Uterus (tissue), 4 donors: ENCODE measurements at regions of chr17 and their contacts with region 1.

Region 1: DNA sequence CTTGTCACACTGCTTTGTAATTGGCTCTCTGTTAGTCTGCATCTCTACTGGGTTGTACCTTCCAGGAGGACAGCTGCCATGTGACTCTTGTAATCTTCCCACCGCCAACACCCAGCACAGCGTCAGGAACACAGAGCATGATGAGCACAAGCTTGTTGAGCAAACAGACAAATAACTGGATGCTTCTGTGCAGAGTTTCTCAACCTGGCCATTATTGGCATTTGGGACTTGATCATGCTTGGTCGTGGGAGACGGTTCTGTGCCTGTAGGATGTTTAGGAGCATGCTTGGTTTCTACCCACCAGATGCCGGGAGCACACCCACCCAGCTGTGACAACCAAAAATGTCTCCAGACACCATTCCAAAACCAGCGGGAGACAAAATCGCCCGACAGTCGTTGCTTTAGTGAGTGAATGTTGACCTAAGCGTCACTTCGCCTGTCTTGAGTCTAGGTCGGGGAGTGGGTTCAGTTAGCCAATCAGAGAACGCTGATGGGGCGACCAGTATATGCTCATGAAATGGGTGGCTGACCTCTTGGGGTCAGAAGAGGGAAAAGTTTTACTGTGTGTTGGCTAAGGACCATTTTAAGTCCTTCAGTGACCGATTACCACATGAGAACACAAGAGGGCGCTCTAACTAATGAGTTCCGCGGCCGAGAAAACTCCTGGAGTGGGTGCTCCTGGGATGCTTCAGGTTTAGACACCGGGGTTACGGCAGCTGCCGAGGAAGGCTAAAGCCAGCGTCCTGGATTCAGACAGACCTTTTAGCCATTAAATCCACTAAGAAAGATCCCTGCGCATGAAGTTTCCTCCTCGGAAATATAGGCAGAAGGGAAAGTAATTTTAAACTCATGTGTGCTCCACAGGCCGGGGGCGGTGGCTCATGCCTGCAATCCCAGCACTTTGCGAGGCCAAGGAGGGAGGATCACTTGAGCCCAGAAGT is 57.8 kb upstream of the TEX2 start:
- DNase-seq: peak; percentile 53 to 75
- H3K4me3 ChIP-seq: no peak overlapping the region
- H3K27ac ChIP-seq: peak overlapping the region in 1 of 2 donors; percentile 25
- H3K4me1 ChIP-seq: no peaks in the 10 kb centered on the region
- H3K27me3 ChIP-seq: no peaks in the 10 kb centered on the region
- CTCF ChIP-seq: peak; percentile 74 to 80 (median 78)
- POLR2A ChIP-seq: no peak

Region 2: DNA sequence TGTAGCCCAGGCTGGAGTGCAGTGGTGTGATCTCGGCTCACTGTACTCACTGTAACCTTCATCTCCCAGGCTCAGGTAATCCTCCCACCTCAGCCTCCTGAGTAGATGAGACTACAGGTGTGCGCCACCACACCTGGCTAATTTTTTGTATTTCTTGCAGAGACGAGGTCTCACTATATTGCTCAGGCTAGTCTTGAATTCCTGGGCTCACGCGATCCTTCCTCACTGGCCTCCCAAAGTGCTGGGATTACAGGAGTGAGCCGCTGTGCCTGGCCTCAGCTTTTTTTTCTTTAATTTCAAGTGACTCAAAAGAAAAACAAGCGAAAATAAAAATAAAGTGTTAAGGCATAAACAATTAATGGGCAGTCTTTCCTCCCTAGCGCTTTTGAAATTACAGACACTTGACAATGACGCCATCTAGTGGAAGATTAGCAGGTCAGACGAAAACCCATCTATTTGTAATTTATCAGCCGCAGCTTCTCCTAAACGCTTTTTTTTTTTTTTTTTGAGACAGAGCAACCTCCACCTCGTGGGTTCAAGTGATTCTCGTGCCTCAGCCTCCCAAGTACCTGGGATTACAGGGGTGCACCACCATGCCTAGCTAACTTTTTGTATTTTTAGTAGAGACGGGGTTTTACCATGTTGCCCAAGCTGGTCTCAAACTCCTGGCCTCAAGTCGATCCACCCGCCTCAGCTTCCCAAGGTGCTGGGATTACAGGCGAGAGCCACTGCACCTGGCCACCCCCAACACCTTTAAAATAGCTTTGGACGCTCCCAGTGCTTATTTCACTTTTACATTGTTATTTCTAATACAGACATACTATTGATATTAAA is 97.8 kb after region 1 on chr17:
- intact Hi-C with region 1: loop called (anchors 5 kb)
- DNase-seq: no peak
- H3K4me3 ChIP-seq: no peak overlapping the region
- H3K27ac ChIP-seq: no peak overlapping the region
- H3K4me1 ChIP-seq: no peaks in the 10 kb centered on the region
- H3K27me3 ChIP-seq: no peaks in the 10 kb centered on the region
- CTCF ChIP-seq: peak; percentile 79 to 85 (median 84)
- POLR2A ChIP-seq: no peak